CD8-positive, alpha-beta T cell (primary cell): ENCODE measurements at regions of chr14 and their contacts with region 1.

Region 1: GRCh38 chr14:23631702-23632460 is 4.3 kb upstream of the DHRS2 start:
- DNase-seq: peak; percentile 41 to 86 (median 75)
- ATAC-seq: peak; percentile 88
- H3K4me3 ChIP-seq: peak overlapping the region; percentile 21 to 33
- H3K4me3 Mint-ChIP-seq: peak overlapping the region; percentile 75
- H3K27ac ChIP-seq: no peak overlapping the region
- H3K27ac Mint-ChIP-seq: peak overlapping the region; percentile 42
- H3K4me1 ChIP-seq: peaks cover 13% of the 10 kb centered on the region
- H3K4me1 Mint-ChIP-seq: peaks cover 7% of the 10 kb centered on the region
- H3K27me3 ChIP-seq: no peaks in the 10 kb centered on the region
- H3K27me3 Mint-ChIP-seq: no peaks in the 10 kb centered on the region
- CTCF ChIP-seq: peak; percentile 97

Region 2: DNA sequence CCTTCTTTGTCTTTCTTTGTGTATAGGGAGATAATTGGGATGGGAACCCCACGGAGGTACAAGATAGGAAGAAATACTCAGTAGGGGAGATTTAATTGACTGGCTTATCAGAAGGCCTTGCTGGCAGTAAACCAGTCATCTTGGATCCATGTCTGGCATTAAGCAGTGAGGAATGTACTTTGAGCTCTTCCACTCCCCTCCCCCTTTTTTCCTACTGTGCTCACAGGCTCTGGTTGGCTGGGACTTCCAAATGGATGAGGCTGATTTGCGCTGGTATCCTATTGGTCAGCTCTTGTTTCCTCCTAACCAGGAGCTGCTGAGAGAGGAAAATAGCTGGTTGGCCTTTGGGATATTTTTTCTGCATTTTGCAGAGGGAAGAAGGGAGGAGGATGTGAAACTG is 137.7 kb before region 1 on chr14:
- CTCF ChIA-PET with region 1: no interaction called
- POLR2A ChIA-PET with region 1: no interaction called
- intact Hi-C with region 1: no loop called
- DNase-seq: no peak
- ATAC-seq: no peak
- H3K4me3 ChIP-seq: no peak overlapping the region
- H3K4me3 Mint-ChIP-seq: no peak overlapping the region
- H3K27ac ChIP-seq: no peak overlapping the region
- H3K27ac Mint-ChIP-seq: no peak overlapping the region
- H3K4me1 ChIP-seq: no peaks in the 10 kb centered on the region
- H3K4me1 Mint-ChIP-seq: no peaks in the 10 kb centered on the region
- H3K27me3 ChIP-seq: no peaks in the 10 kb centered on the region
- H3K27me3 Mint-ChIP-seq: no peaks in the 10 kb centered on the region
- CTCF ChIP-seq: no peak

Region 3: DNA sequence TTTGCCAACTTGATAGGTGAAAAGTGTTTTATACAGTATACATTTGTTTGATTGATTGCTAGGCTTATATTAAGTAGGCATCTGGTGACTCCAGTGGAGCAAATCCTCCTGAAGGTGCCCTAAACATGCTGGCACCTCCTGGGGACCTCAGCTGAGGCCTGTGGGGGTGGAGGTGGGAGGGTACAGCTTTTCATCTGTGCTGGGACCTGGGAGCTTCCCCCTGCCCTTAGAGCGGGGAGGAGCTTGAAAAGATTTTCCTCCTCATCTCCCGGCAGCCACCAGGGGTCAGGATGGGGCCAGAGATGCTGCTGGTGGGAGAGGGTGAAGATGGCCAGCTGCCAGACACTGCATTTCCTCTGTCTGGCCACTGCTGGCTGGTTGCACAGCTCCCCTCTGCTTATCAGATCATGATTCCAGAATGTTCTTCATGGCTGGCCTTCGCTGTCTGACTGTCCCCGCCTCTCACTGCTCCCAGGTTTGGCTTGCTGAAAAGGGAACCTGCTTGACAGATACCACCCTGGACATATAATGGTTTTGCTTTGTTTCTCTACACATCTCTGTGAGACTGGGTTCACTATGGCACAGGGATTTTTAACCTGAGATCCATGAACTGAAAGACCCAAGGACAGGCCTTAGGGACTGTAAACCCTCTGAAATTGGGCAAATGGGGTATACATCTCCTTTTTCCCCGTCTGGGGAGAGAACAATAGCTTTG is 42.8 kb before region 1 on chr14:
- CTCF ChIA-PET with region 1: interaction called, 71 read pairs
- POLR2A ChIA-PET with region 1: no interaction called
- intact Hi-C with region 1: loop called (anchors 1 to 5 kb)
- DNase-seq: peak; percentile 65 to 90 (median 83)
- ATAC-seq: peak; percentile 94
- H3K4me3 ChIP-seq: no peak overlapping the region
- H3K4me3 Mint-ChIP-seq: no peak overlapping the region
- H3K27ac ChIP-seq: no peak overlapping the region
- H3K27ac Mint-ChIP-seq: no peak overlapping the region
- H3K4me1 ChIP-seq: peaks cover 9% of the 10 kb centered on the region
- H3K4me1 Mint-ChIP-seq: peaks cover 11% of the 10 kb centered on the region
- H3K27me3 ChIP-seq: no peaks in the 10 kb centered on the region
- H3K27me3 Mint-ChIP-seq: peaks cover 16% of the 10 kb centered on the region
- CTCF ChIP-seq: peak; percentile 65

Region 4: GRCh38 chr14:23621204-23621931 is 10.5 kb before region 1 on chr14:
- CTCF ChIA-PET with region 1: interaction called, 26 read pairs
- POLR2A ChIA-PET with region 1: no interaction called
- intact Hi-C with region 1: no loop called
- DNase-seq: no peak
- ATAC-seq: no peak
- H3K4me3 ChIP-seq: no peak overlapping the region
- H3K4me3 Mint-ChIP-seq: no peak overlapping the region
- H3K27ac ChIP-seq: no peak overlapping the region
- H3K27ac Mint-ChIP-seq: no peak overlapping the region
- H3K4me1 ChIP-seq: no peaks in the 10 kb centered on the region
- H3K4me1 Mint-ChIP-seq: no peaks in the 10 kb centered on the region
- H3K27me3 ChIP-seq: no peaks in the 10 kb centered on the region
- H3K27me3 Mint-ChIP-seq: peaks cover 2% of the 10 kb centered on the region
- CTCF ChIP-seq: no peak

Region 5: GRCh38 chr14:23657951-23658470 is 26.1 kb after region 1 on chr14:
- CTCF ChIA-PET with region 1: interaction called, 15 read pairs
- POLR2A ChIA-PET with region 1: no interaction called
- intact Hi-C with region 1: no loop called
- DNase-seq: no peak
- ATAC-seq: no peak
- H3K4me3 ChIP-seq: no peak overlapping the region
- H3K4me3 Mint-ChIP-seq: no peak overlapping the region
- H3K27ac ChIP-seq: no peak overlapping the region
- H3K27ac Mint-ChIP-seq: no peak overlapping the region
- H3K4me1 ChIP-seq: peaks cover 6% of the 10 kb centered on the region
- H3K4me1 Mint-ChIP-seq: peaks cover 7% of the 10 kb centered on the region
- H3K27me3 ChIP-seq: no peaks in the 10 kb centered on the region
- H3K27me3 Mint-ChIP-seq: no peaks in the 10 kb centered on the region
- CTCF ChIP-seq: no peak

Region 6: DNA sequence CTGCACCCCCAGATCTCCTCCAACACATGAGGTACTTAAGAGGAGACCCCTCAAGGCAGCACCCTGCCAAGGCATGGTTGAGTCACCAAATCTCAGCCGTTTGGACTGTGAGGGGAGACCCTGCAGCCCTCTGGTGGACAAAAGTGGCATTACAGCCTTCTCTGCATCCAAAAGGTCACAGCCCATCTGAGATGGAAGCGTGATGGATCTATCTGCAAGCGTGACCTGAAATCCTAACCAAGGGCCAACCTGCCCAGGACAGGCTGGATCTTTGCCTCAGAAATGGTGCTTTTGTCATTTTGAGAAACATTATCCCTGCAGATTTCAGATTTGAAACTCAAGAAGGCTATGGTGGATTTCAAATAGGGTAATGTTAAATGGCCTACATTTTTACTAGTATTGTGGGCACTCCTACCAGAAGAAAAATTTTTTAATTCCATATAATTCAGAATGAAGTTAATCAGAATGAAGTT is 298.0 kb after region 1 on chr14:
- CTCF ChIA-PET with region 1: interaction called, 16 read pairs
- POLR2A ChIA-PET with region 1: no interaction called
- intact Hi-C with region 1: loop called (anchors 1 to 2 kb)
- DNase-seq: peak; percentile 69 to 91 (median 83)
- ATAC-seq: peak; percentile 98
- H3K4me3 ChIP-seq: no peak overlapping the region
- H3K4me3 Mint-ChIP-seq: no peak overlapping the region
- H3K27ac ChIP-seq: no peak overlapping the region
- H3K27ac Mint-ChIP-seq: no peak overlapping the region
- H3K4me1 ChIP-seq: no peaks in the 10 kb centered on the region
- H3K4me1 Mint-ChIP-seq: peaks cover 4% of the 10 kb centered on the region
- H3K27me3 ChIP-seq: peaks cover 0 to 3% of the 10 kb centered on the region in 2 experiments
- H3K27me3 Mint-ChIP-seq: no peaks in the 10 kb centered on the region
- CTCF ChIP-seq: peak; percentile 96